SK-N-SH (cell line): ENCODE measurements at regions of chr2 and their contacts with region 1.

Region 1: GRCh38 chr2:61993444-61994024 is 88.1 kb downstream of the COMMD1 start:
- DNase-seq: peak; percentile 57
- H3K4me3 ChIP-seq: no peak overlapping the region; a peak in 1 of 4 replicates
- H3K27ac ChIP-seq: no peak overlapping the region
- H3K4me1 ChIP-seq: peaks cover 0 to 2% of the 10 kb centered on the region in 2 experiments; a peak in 1 of 4 replicates
- H3K27me3 ChIP-seq: no peaks in the 10 kb centered on the region
- CTCF ChIP-seq: peak; percentile 87
- EP300 ChIP-seq: no peak
- RAD21 ChIP-seq: peak; percentile 95

Region 2: DNA sequence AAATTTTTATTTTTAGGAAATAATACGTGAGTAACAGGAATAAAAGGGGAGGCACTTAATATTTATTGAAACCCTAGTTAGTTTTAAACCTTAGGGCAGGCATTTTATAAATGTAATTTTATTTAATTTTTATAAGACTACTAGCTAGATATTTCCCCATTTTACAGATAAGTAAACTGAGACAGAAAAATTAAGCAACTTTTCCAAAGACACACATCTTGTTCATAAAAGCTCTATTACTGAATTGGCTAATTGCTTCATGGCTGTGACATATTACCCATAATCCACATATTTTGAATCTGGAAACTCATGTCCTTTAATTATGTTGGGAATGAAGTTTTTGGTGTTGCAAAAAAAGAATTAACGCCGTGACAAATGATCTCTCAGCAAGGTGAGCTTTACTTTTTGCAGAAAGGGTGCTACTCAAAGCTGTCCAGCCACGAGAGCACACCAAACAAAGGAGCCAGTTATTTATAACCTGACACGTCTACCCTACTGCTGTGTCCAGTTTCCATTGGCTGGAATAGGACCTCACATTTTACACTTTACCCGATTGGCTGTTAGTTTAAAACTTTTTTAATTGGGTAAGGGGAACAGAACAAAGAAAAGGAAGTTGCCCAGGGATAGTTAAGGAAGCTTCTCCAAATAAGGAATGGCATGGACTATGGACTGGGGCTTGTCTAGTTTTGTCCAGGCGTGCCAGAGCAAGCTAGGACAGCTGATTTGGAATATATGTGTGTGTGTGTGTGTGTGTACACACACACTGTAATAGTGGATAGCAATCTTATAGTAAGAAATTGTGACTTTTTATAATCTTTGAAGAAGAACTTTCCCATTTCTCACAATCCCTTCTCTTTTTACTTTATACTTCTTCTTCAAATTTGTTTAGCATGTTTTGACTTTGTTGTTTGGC is 33.9 kb before region 1 on chr2:
- CTCF ChIA-PET with region 1: no interaction called
- POLR2A ChIA-PET with region 1: no interaction called
- DNase-seq: no peak
- H3K4me3 ChIP-seq: no peak overlapping the region
- H3K27ac ChIP-seq: no peak overlapping the region
- H3K4me1 ChIP-seq: no peaks in the 10 kb centered on the region
- H3K27me3 ChIP-seq: no peaks in the 10 kb centered on the region
- CTCF ChIP-seq: no peak
- EP300 ChIP-seq: no peak
- RAD21 ChIP-seq: no peak

Region 3: DNA sequence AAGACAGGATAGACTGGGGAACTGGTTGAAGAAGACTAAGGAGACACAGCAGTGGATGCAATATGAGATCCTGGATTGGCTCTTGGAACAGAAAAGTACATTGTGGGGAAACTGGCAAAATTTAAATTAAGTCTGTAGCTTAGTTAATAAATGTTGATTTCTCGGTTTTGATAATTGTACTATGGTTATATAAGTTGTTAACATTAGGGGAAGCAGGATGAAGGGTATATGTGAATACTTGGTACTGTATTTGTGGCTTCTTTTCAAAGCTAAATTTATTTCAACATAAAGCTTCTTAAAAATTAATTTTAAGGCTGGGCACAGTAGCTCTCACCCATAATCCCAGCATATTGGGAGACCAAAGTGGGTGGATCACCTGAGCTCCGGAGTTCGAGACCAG is 408.6 kb after region 1 on chr2:
- CTCF ChIA-PET with region 1: interaction called, 143 read pairs
- POLR2A ChIA-PET with region 1: no interaction called
- DNase-seq: no peak
- H3K4me3 ChIP-seq: no peak overlapping the region
- H3K27ac ChIP-seq: no peak overlapping the region
- H3K4me1 ChIP-seq: no peaks in the 10 kb centered on the region; a peak in 1 of 4 replicates
- H3K27me3 ChIP-seq: no peaks in the 10 kb centered on the region
- CTCF ChIP-seq: no peak
- EP300 ChIP-seq: no peak
- RAD21 ChIP-seq: no peak